MCF 10A (cell line): ENCODE measurements at regions of chr11 and their contacts with region 1.

Region 1: GRCh38 chr11:128039140-128040021 is 548.0 kb downstream of the ETS1 start:
- DNase-seq: peak; percentile 94
- H3K4me3 Mint-ChIP-seq: peak overlapping the region; percentile 3
- H3K27ac Mint-ChIP-seq: peak overlapping the region; percentile 0
- H3K4me1 Mint-ChIP-seq: peaks cover 24% of the 10 kb centered on the region
- H3K27me3 Mint-ChIP-seq: no peaks in the 10 kb centered on the region
- CTCF ChIP-seq: no peak

Region 2: GRCh38 chr11:127859941-127860354 is 179.4 kb before region 1 on chr11:
- CTCF ChIA-PET with region 1: no interaction called
- POLR2A ChIA-PET with region 1: no interaction called
- intact Hi-C with region 1: no loop called
- DNase-seq: no peak
- H3K4me3 Mint-ChIP-seq: no peak overlapping the region
- H3K27ac Mint-ChIP-seq: no peak overlapping the region
- H3K4me1 Mint-ChIP-seq: peaks cover 15% of the 10 kb centered on the region
- H3K27me3 Mint-ChIP-seq: no peaks in the 10 kb centered on the region
- CTCF ChIP-seq: no peak

Region 3: DNA sequence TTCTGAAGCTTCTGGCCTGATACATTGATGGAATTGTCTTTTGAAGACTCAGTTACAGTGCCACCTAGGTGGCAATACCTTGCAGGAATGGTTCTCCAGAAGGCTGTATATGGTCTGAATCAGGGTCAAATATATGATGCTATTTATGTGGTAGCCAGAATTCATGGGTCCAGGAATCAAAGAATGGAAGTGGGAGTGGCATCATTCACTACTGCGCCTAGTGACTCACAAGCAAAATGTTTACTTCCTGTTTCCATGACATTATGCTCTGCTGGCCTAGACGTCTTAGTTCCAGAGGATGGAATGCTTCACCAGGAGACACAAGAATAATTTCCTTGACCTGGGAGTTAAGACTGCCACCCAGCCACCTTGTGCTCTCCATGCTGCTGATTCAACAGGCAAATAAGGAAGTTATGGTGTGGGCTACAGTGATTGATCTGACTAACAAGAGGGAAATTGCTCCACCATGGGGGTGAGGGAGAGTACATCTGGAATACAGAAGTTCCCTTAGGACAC is 56.1 kb after region 1 on chr11:
- CTCF ChIA-PET with region 1: no interaction called
- POLR2A ChIA-PET with region 1: no interaction called
- intact Hi-C with region 1: loop called (anchors 1 kb)
- DNase-seq: peak; percentile 72
- H3K4me3 Mint-ChIP-seq: peak overlapping the region; percentile 50
- H3K27ac Mint-ChIP-seq: peak overlapping the region; percentile 92
- H3K4me1 Mint-ChIP-seq: peaks cover 25% of the 10 kb centered on the region
- H3K27me3 Mint-ChIP-seq: no peaks in the 10 kb centered on the region
- CTCF ChIP-seq: no peak

Region 4: DNA sequence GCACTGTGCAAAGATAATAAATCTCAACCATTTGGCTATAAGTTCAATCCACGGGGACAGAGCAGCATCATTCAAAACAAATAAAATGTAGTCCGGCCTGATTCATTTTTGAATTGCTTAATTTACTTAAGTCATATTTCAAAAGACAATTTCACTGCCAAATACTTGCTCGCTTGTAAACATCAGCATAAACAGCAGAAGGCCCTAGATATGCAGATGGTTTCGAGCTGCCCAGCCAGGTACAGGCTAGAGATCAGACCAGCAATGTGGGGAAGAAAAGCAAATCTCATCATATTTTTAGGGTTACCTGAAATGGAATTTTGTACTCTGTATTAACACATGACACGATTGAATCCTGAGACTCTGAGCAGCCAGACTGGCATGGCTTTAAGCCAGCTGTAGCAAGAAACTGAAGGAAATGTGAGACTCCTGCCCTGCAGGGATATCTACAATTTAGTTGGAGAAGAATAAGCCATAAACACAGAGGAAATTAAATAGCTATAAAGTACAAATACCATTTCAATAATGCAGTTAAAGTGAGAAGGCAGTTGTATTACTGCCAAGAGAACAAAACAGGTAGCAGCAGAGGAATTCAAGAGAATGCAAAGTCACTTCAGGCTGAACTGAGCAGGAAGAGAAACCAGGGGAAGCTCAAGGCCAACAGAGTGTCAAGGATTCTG is 107.7 kb after region 1 on chr11:
- CTCF ChIA-PET with region 1: interaction called, 13 read pairs
- POLR2A ChIA-PET with region 1: interaction called, 6 read pairs
- intact Hi-C with region 1: no loop called
- DNase-seq: peak; percentile 73
- H3K4me3 Mint-ChIP-seq: peak overlapping the region; percentile 48
- H3K27ac Mint-ChIP-seq: peak overlapping the region; percentile 92
- H3K4me1 Mint-ChIP-seq: peaks cover 22% of the 10 kb centered on the region
- H3K27me3 Mint-ChIP-seq: no peaks in the 10 kb centered on the region
- CTCF ChIP-seq: no peak

Region 5: DNA sequence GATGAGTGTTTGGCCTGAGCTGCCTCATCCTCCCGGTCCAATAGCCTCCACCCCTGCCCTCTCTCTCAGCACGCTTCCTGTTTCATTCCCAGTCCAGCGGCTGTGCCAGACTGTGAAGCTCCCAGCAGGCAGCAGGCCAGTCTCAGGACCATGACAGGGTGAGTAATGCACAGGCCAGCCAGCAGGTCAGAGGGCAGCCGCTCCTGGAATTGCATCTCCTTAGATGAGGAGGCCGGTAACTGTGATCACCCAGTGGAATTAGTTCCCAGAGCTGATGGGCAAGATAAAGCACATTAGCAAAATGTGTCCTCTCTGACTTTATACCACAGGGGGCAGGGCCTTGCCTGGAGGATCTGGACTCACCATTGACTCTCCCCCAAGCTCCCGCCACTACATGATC is 296.8 kb after region 1 on chr11:
- CTCF ChIA-PET with region 1: no interaction called
- POLR2A ChIA-PET with region 1: no interaction called
- intact Hi-C with region 1: no loop called
- DNase-seq: peak; percentile 46
- H3K4me3 Mint-ChIP-seq: no peak overlapping the region
- H3K27ac Mint-ChIP-seq: no peak overlapping the region
- H3K4me1 Mint-ChIP-seq: no peaks in the 10 kb centered on the region
- H3K27me3 Mint-ChIP-seq: no peaks in the 10 kb centered on the region
- CTCF ChIP-seq: no peak